ENCODE measurements at regions of chr17 and their contacts with region 1.

Region 1: DNA sequence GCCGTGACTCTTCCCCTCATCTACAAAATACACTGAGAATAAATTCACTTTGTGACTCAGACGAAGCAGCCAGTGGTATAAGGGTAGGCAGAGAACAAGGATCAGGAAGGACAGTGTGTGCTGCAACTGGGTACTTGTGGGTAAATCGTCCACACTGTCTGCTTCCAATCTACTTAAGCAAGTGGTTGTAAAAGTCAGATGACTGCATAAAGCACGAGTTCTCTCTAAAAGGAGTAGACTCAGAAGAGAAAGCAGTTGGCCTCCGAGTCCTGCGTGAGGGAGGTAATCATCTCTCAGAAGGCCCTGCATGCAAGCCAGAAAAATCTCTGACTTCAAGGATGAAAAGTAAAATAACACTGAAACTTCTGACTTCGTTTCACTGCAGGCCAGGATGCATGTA is 43.1 kb downstream of the ANKFY1 start:
- DNase-seq: peak; percentile 20
- H3K4me3 ChIP-seq: no peak overlapping the region
- H3K27ac ChIP-seq: peak overlapping the region; percentile 15 to 28
- H3K4me1 ChIP-seq: no peaks in the 10 kb centered on the region
- H3K27me3 ChIP-seq: no peaks in the 10 kb centered on the region
- CTCF ChIP-seq: no peak
- POLR2A ChIP-seq: no peak

Region 2: GRCh38 chr17:4064366-4064765 is 156.3 kb before region 1 on chr17:
- intact Hi-C with region 1: no loop called
- DNase-seq: no peak
- H3K4me3 ChIP-seq: no peak overlapping the region
- H3K27ac ChIP-seq: no peak overlapping the region
- H3K4me1 ChIP-seq: no peaks in the 10 kb centered on the region
- H3K27me3 ChIP-seq: no peaks in the 10 kb centered on the region
- CTCF ChIP-seq: no peak
- POLR2A ChIP-seq: no peak

Region 3: GRCh38 chr17:4263282-4264215 is 42.9 kb after region 1 on chr17 and contains the start of gene ANKFY1:
- intact Hi-C with region 1: loop called (anchors 5 kb)
- DNase-seq: peak; percentile 93
- H3K4me3 ChIP-seq: peak within 1 kb of the TSS; percentile 99
- H3K27ac ChIP-seq: peak within 1 kb of the TSS; percentile 71 to 86
- H3K4me1 ChIP-seq: no peaks in the 10 kb centered on the region
- H3K27me3 ChIP-seq: no peaks in the 10 kb centered on the region
- CTCF ChIP-seq: peak in 2 of 4 experiments; percentile 33 to 35
- POLR2A ChIP-seq: peak; percentile 72
- total RNA-seq, gene ANKFY1: 35.2 to 46.0 TPM

Region 4: DNA sequence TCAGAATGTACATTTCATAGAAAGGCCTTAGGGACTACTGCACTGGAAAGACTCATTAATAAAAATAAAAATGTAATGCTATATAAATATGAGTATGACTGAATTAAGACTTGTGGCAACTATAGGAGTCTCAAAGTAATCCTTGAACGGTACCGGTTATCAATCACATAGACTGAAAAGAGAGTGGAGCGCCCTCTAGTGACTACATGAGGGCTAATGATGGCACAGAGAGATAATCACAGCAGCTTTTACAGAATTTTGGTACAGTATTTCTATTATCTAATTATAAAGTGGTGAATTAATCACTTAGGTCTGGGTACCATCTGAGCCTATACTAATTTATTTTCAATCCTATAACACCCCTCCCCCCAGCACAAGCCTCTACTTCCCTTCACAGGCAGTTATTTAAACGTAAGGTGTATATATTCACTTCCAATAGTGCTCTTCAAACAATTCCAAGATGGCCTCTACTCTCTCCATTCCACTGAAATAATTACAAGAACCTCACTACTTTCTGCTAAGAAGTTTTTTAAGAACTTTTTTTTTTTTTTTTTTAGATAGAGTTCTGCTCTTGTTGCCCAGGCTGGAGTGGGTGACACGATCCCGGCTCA is 83.9 kb after region 1 on chr17:
- intact Hi-C with region 1: loop called (anchors 5 kb)
- DNase-seq: peak; percentile 39
- H3K4me3 ChIP-seq: no peak overlapping the region
- H3K27ac ChIP-seq: no peak overlapping the region
- H3K4me1 ChIP-seq: no peaks in the 10 kb centered on the region
- H3K27me3 ChIP-seq: no peaks in the 10 kb centered on the region
- CTCF ChIP-seq: peak; percentile 41 to 58 (median 56)
- POLR2A ChIP-seq: no peak

Region 5: GRCh38 chr17:4366327-4367063 is 145.8 kb after region 1 on chr17 and contains the start of gene UBE2G1:
- intact Hi-C with region 1: loop called (anchors 5 kb)
- DNase-seq: peak; percentile 96
- H3K4me3 ChIP-seq: peak within 1 kb of the TSS; percentile 67 to 100
- H3K27ac ChIP-seq: peak within 1 kb of the TSS; percentile 87 to 96
- H3K4me1 ChIP-seq: no peaks in the 10 kb centered on the region
- H3K27me3 ChIP-seq: no peaks in the 10 kb centered on the region
- CTCF ChIP-seq: peak in 3 of 4 experiments; percentile 22 to 44 (median 39)
- POLR2A ChIP-seq: peak; percentile 95
- total RNA-seq, gene UBE2G1: 54.1 to 59.3 TPM

Measured in prostate gland (tissue), 2 donors.